Adrenal gland (tissue), 19 donors: ENCODE measurements at regions of chr17 and their contacts with region 1.

Region 1: GRCh38 chr17:68196944-68197595 is 50.8 kb upstream of the AMZ2 start:
- DNase-seq: peak in 1 of 7 donors; percentile 43
- H3K4me3 ChIP-seq: peak overlapping the region in 1 of 4 donors; percentile 35
- H3K27ac ChIP-seq: no peak overlapping the region
- H3K4me1 ChIP-seq: peaks cover 30 to 48% of the 10 kb centered on the region in 2 donors
- H3K27me3 ChIP-seq: peaks cover 47% of the 10 kb centered on the region
- CTCF ChIP-seq: no peak
- POLR2A ChIP-seq: no peak

Region 2: GRCh38 chr17:68057531-68057952 is 139.5 kb before region 1 on chr17:
- intact Hi-C with region 1: loop called in 1 of 2 experiments (anchors 5 kb)
- DNase-seq: peak in 5 of 7 donors; percentile 27 to 71 (median 40)
- H3K4me3 ChIP-seq: no peak overlapping the region
- H3K27ac ChIP-seq: no peak overlapping the region
- H3K4me1 ChIP-seq: peaks cover 0 to 7% of the 10 kb centered on the region in 2 donors
- H3K27me3 ChIP-seq: no peaks in the 10 kb centered on the region
- CTCF ChIP-seq: peak; percentile 27 to 59 (median 47)
- POLR2A ChIP-seq: no peak

Region 3: GRCh38 chr17:68457539-68458259 is 260.6 kb after region 1 on chr17:
- intact Hi-C with region 1: no loop called
- DNase-seq: peak; percentile 99 to 100 (median 99)
- H3K4me3 ChIP-seq: peak overlapping the region in 3 of 4 donors; percentile 2 to 93 (median 39)
- H3K27ac ChIP-seq: peak overlapping the region; percentile 40 to 99 (median 95)
- H3K4me1 ChIP-seq: peaks cover 12 to 61% of the 10 kb centered on the region in 2 donors
- H3K27me3 ChIP-seq: no peaks in the 10 kb centered on the region
- CTCF ChIP-seq: peak in 1 of 6 experiments; percentile 23
- POLR2A ChIP-seq: peak; percentile 80 to 99